Activated naive CD8-positive, alpha-beta T cell treated with anti-CD3 and anti-CD28 coated beads, Interleukin-2, amount 10 ng/mL, durations not matched to agents 7 days and 5 days (primary cell): ENCODE measurements at regions of chr9 and their contacts with region 1.

Region 1: GRCh38 chr9:96449845-96450612 is at the start of gene HABP4:
- DNase-seq: peak; percentile 98
- ATAC-seq: peak; percentile 99
- H3K4me3 Mint-ChIP-seq: peak within 1 kb of the TSS; percentile 84
- H3K27ac Mint-ChIP-seq: peak within 1 kb of the TSS; percentile 73
- H3K4me1 Mint-ChIP-seq: peaks cover 12% of the 10 kb centered on the region
- H3K27me3 Mint-ChIP-seq: peaks cover 26% of the 10 kb centered on the region
- total RNA-seq, gene HABP4: 11.4 to 11.8 TPM

Region 2: DNA sequence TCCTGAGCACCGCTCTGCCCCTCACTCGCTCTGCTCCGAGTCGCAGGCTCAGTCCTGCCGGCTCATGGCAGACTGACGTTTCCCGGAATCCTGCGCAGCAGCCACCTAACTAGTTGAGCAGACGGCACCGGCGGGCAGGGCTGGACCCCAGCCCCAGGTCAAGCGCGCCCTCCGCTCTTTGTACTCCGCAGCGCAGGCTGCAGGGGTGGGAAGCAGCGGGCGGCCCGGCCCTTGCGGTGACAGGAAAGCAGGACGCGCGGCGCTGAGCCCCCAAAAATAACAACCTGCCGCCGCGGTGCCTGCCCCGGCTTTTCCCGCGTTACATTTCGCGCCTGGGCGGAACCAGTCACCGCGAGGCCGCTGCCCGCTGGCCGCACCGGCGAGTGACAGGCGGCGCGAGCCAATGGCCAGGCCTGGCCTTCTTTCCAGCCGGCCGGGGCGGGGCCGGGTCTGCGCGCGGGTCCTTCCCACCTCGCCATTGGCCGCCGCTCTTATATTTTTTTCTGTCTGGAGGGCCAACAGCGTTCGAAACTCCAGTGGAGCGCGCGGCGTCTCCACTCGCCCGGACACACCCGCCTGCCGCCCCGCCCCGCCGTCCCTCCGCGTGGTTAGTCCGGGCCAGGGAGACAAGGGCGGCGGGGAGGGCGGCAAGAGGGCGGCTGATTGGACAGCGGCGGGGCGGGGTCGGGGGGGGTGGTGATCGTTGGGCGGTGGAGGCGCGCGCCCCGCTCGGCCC is 31.8 kb before region 1 on chr9 and contains the start of gene ZNF367:
- POLR2A ChIA-PET with region 1: interaction called, 16 read pairs
- DNase-seq: peak; percentile 95
- ATAC-seq: peak; percentile 83
- H3K4me3 Mint-ChIP-seq: peak within 1 kb of the TSS; percentile 96
- H3K27ac Mint-ChIP-seq: peak within 1 kb of the TSS; percentile 91
- H3K4me1 Mint-ChIP-seq: peaks cover 33% of the 10 kb centered on the region
- H3K27me3 Mint-ChIP-seq: no peaks in the 10 kb centered on the region
- total RNA-seq, gene ZNF367: 26.0 to 27.3 TPM

Region 3: GRCh38 chr9:96460882-96461281 is 10.9 kb after region 1 on chr9:
- POLR2A ChIA-PET with region 1: no interaction called
- DNase-seq: no peak
- ATAC-seq: no peak
- H3K4me3 Mint-ChIP-seq: no peak overlapping the region
- H3K27ac Mint-ChIP-seq: no peak overlapping the region
- H3K4me1 Mint-ChIP-seq: no peaks in the 10 kb centered on the region
- H3K27me3 Mint-ChIP-seq: no peaks in the 10 kb centered on the region

Region 4: GRCh38 chr9:96478829-96479371 is 28.9 kb after region 1 on chr9:
- POLR2A ChIA-PET with region 1: no interaction called
- DNase-seq: no peak
- ATAC-seq: no peak
- H3K4me3 Mint-ChIP-seq: no peak overlapping the region
- H3K27ac Mint-ChIP-seq: no peak overlapping the region
- H3K4me1 Mint-ChIP-seq: peaks cover 3% of the 10 kb centered on the region
- H3K27me3 Mint-ChIP-seq: no peaks in the 10 kb centered on the region